ENCODE measurements at regions of chr9 and their contacts with region 1.

Region 1: GRCh38 chr9:88476491-88477271 is 58.3 kb upstream of the NXNL2 start:
- DNase-seq: no peak
- H3K4me3 ChIP-seq: no peak overlapping the region
- H3K27ac ChIP-seq: no peak overlapping the region
- H3K27me3 ChIP-seq: no peaks in the 10 kb centered on the region
- CTCF ChIP-seq: no peak

Region 2: GRCh38 chr9:87640385-87640795 is 836.3 kb before region 1 on chr9:
- intact Hi-C with region 1: no loop called
- DNase-seq: no peak
- H3K4me3 ChIP-seq: no peak overlapping the region
- H3K27ac ChIP-seq: peak overlapping the region in 7 of 59 donors; percentile 1 to 36 (median 14)
- H3K27me3 ChIP-seq: no peaks in the 10 kb centered on the region
- CTCF ChIP-seq: no peak

Region 3: GRCh38 chr9:88383176-88383575 is 93.5 kb before region 1 on chr9:
- intact Hi-C with region 1: loop called in 1 of 2 experiments (anchors 5 kb)
- DNase-seq: no peak
- H3K4me3 ChIP-seq: no peak overlapping the region
- H3K27ac ChIP-seq: no peak overlapping the region
- H3K27me3 ChIP-seq: no peaks in the 10 kb centered on the region
- CTCF ChIP-seq: no peak

Region 4: DNA sequence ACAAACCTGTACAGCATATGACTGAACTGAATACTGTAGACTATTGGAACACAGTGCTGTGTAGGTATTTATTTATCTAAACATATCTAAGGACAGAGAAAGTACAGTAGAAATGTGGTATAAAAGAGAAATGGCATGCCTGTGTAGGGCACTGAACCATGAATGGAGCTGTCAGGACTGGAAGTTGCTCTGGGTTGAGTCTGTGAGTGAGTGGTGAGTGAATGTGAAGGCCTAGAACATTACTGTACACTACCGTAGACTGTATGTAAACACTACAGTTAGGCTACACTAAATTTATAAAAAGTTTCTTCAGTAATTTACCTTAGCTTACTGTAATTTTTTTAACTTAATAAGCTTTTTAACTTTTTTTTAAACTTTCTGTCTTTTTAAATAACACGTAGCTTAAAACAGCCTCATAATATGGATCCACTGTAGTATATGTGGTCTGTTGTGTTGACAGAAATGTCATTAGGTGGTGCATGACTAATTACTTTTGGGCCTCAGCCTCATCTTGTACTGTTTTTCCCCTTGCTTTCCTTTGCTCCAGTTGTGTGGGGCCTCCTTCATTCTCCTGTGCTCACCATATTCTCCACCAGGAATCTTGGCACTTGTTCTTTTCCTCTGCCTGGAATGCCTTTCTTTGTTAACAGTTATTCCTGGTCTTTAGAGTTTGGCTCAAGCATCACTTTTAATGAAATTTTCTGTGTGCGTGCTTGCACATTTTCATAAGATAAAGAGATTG is 79.7 kb before region 1 on chr9:
- intact Hi-C with region 1: no loop called
- DNase-seq: no peak
- H3K4me3 ChIP-seq: no peak overlapping the region
- H3K27ac ChIP-seq: no peak overlapping the region
- H3K27me3 ChIP-seq: no peaks in the 10 kb centered on the region
- CTCF ChIP-seq: no peak

Measured in dorsolateral prefrontal cortex (tissue), 120 donors.